ENCODE measurements at regions of chr10 and their contacts with region 1.

Region 1: GRCh38 chr10:88848499-88848898 is 3.1 kb downstream of the ANKRD22 start:
- DNase-seq: no peak
- H3K4me3 ChIP-seq: no peak overlapping the region
- H3K27ac ChIP-seq: peak overlapping the region; percentile 36
- H3K4me1 ChIP-seq: peaks cover 6% of the 10 kb centered on the region
- H3K27me3 ChIP-seq: no peaks in the 10 kb centered on the region
- CTCF ChIP-seq: no peak

Region 2: GRCh38 chr10:89217057-89217990 is 368.8 kb after region 1 on chr10:
- intact Hi-C with region 1: loop called (anchors 10 kb)
- DNase-seq: peak; percentile 71
- H3K4me3 ChIP-seq: no peak overlapping the region
- H3K27ac ChIP-seq: no peak overlapping the region
- H3K4me1 ChIP-seq: no peaks in the 10 kb centered on the region
- H3K27me3 ChIP-seq: no peaks in the 10 kb centered on the region
- CTCF ChIP-seq: peak; percentile 73

Measured in colonic mucosa (tissue), 4 donors.